ENCODE measurements at regions of chr10 and their contacts with region 1.

Region 1: GRCh38 chr10:89793649-89794254 is 92.4 kb downstream of the KIF20B start:
- DNase-seq: no peak
- H3K4me3 ChIP-seq: no peak overlapping the region
- H3K27ac ChIP-seq: no peak overlapping the region
- H3K4me1 ChIP-seq: no peaks in the 10 kb centered on the region
- H3K27me3 ChIP-seq: no peaks in the 10 kb centered on the region
- CTCF ChIP-seq: peak; percentile 73 to 77

Region 2: GRCh38 chr10:90787393-90788198 is 993.8 kb after region 1 on chr10:
- intact Hi-C with region 1: loop called (anchors 10 kb)
- DNase-seq: no peak
- H3K4me3 ChIP-seq: no peak overlapping the region
- H3K27ac ChIP-seq: no peak overlapping the region
- H3K4me1 ChIP-seq: no peaks in the 10 kb centered on the region
- H3K27me3 ChIP-seq: no peaks in the 10 kb centered on the region
- CTCF ChIP-seq: peak; percentile 50 to 68

Region 3: DNA sequence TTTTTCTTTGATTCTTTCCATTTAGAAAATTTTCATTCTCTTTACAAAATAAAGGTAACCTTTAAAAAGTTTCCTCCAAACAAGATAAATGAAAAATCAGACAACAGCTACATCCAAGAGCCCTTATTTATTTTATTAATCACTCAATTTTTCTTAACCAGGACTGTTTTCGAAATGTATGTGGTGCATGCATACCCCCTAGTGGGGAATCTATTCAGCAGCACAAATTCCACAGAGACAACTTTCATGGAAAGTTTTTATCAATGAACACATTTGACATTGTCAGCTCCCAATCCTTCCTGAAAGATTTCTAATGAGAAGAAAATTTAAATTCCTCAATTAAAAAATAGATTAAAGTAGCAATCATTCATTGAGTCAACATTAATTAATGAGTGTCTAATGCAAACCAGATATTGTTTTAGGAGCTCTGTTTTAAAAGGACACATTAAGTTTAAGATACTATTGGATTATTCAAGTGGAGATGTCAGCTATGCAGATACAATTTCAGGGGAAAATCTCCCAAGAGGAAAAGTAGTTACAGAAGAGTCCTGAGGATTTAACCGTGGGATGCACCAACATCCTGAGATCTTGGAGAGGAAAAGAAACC is 1069.3 kb after region 1 on chr10:
- intact Hi-C with region 1: loop called (anchors 5 kb)
- DNase-seq: no peak
- H3K4me3 ChIP-seq: no peak overlapping the region
- H3K27ac ChIP-seq: no peak overlapping the region
- H3K4me1 ChIP-seq: peaks cover 0 to 4% (median 0%) of the 10 kb centered on the region in 4 donors
- H3K27me3 ChIP-seq: no peaks in the 10 kb centered on the region
- CTCF ChIP-seq: peak; percentile 54 to 59

Measured in tibial artery (tissue), 4 donors.